ENCODE measurements at regions of chr12 and their contacts with region 1.

Region 1: GRCh38 chr12:120686690-120687577 is at the start of gene MLEC:
- DNase-seq: peak; percentile 100
- H3K4me3 Mint-ChIP-seq: peak within 1 kb of the TSS; percentile 88
- H3K27ac Mint-ChIP-seq: peak within 1 kb of the TSS; percentile 86
- H3K4me1 Mint-ChIP-seq: peaks cover 48% of the 10 kb centered on the region
- H3K27me3 Mint-ChIP-seq: no peaks in the 10 kb centered on the region
- total RNA-seq, gene MLEC: 139 and 150 TPM in 2 replicates

Region 2: DNA sequence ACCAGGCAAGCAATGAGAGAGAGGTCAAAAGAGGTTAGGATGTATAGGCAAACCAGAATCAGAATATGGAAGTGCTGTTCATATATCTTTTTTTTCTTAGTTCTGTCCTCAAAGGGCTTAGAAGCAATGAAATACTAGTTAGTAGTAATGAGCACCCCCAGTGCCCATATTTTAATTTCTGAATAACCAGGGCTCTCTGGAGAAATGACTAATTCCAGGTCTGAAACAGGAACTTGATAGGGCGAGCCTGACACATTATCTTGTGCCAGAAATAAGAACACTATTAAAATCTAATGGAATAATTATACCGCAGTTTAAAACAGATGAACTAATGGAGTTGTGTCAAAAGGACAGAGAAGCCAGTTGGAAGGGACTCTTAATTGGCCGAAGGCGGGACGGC is 667.0 kb before region 1 on chr12:
- intact Hi-C with region 1: no loop called
- DNase-seq: no peak
- H3K4me3 Mint-ChIP-seq: no peak overlapping the region
- H3K27ac Mint-ChIP-seq: peak overlapping the region; percentile 44
- H3K4me1 Mint-ChIP-seq: peaks cover 34% of the 10 kb centered on the region
- H3K27me3 Mint-ChIP-seq: no peaks in the 10 kb centered on the region

Region 3: GRCh38 chr12:120116792-120117651 is 569.9 kb before region 1 on chr12:
- intact Hi-C with region 1: loop called (anchors 2 kb)
- DNase-seq: peak; percentile 97
- H3K4me3 Mint-ChIP-seq: peak overlapping the region; percentile 92
- H3K27ac Mint-ChIP-seq: peak overlapping the region; percentile 94
- H3K4me1 Mint-ChIP-seq: peaks cover 72% of the 10 kb centered on the region
- H3K27me3 Mint-ChIP-seq: no peaks in the 10 kb centered on the region

Region 4: DNA sequence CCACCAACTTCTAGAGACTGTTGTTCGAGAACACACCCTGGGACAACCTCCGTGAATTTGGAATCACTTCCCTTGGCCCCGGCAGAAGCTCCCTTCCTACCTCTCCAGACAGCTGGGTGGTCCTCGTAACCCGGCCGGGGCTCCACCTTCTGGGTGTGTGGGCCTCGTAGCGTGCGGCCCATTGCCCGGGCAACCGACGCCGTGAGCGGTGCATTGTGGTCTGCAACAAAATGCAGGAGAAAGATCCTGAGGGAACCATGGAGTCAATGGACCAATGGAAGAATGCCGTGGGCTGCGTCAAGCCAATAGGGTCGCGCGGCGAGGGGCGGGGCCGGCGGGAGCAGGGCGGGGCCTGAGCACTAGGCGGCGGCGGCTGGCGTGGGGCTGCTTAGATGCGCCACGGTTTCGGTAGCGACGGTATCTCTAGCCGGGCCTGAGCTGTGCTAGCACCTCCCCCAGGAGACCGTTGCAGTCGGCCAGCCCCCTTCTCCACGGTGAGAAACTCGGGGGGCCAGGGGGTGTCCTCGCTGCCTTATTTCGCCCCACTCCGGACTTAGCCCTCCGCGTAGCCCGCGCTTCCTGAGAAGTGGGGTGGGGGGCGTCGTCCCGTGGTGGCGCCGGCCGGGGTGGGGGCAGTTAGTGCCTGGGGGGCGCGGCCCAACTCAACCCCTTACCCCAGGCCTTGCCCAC is 191.1 kb before region 1 on chr12 and contains the start of gene DYNLL1:
- intact Hi-C with region 1: loop called (anchors 1 kb)
- DNase-seq: peak; percentile 98
- H3K4me3 Mint-ChIP-seq: peak within 1 kb of the TSS; percentile 99
- H3K27ac Mint-ChIP-seq: peak within 1 kb of the TSS; percentile 89
- H3K4me1 Mint-ChIP-seq: peaks cover 37% of the 10 kb centered on the region
- H3K27me3 Mint-ChIP-seq: no peaks in the 10 kb centered on the region
- total RNA-seq, gene DYNLL1: 341 and 356 TPM in 2 replicates

Region 5: GRCh38 chr12:120649442-120650232 is 37.3 kb before region 1 on chr12:
- intact Hi-C with region 1: loop called (anchors 1 kb)
- DNase-seq: no peak
- H3K4me3 Mint-ChIP-seq: no peak overlapping the region
- H3K27ac Mint-ChIP-seq: no peak overlapping the region
- H3K4me1 Mint-ChIP-seq: peaks cover 15% of the 10 kb centered on the region
- H3K27me3 Mint-ChIP-seq: peaks cover 54% of the 10 kb centered on the region

Region 6: GRCh38 chr12:120904197-120904773 is 217.4 kb after region 1 on chr12 and contains the start of gene SPPL3:
- intact Hi-C with region 1: loop called (anchors 1 kb)
- DNase-seq: peak; percentile 88
- H3K4me3 Mint-ChIP-seq: peak within 1 kb of the TSS; percentile 100
- H3K27ac Mint-ChIP-seq: peak within 1 kb of the TSS; percentile 94
- H3K4me1 Mint-ChIP-seq: peaks cover 21% of the 10 kb centered on the region
- H3K27me3 Mint-ChIP-seq: peaks cover 2% of the 10 kb centered on the region
- total RNA-seq, gene SPPL3: 27.3 and 31.2 TPM in 2 replicates

Region 7: GRCh38 chr12:121209624-121210572 is 523.0 kb after region 1 on chr12 and contains the start of gene P2RX4:
- intact Hi-C with region 1: loop called (anchors 1 kb)
- DNase-seq: peak; percentile 87
- H3K4me3 Mint-ChIP-seq: peak within 1 kb of the TSS; percentile 85
- H3K27ac Mint-ChIP-seq: peak within 1 kb of the TSS; percentile 94
- H3K4me1 Mint-ChIP-seq: peaks cover 33% of the 10 kb centered on the region
- H3K27me3 Mint-ChIP-seq: peaks cover 1% of the 10 kb centered on the region
- total RNA-seq, gene P2RX4: 22.8 and 25.3 TPM in 2 replicates

Region 8: DNA sequence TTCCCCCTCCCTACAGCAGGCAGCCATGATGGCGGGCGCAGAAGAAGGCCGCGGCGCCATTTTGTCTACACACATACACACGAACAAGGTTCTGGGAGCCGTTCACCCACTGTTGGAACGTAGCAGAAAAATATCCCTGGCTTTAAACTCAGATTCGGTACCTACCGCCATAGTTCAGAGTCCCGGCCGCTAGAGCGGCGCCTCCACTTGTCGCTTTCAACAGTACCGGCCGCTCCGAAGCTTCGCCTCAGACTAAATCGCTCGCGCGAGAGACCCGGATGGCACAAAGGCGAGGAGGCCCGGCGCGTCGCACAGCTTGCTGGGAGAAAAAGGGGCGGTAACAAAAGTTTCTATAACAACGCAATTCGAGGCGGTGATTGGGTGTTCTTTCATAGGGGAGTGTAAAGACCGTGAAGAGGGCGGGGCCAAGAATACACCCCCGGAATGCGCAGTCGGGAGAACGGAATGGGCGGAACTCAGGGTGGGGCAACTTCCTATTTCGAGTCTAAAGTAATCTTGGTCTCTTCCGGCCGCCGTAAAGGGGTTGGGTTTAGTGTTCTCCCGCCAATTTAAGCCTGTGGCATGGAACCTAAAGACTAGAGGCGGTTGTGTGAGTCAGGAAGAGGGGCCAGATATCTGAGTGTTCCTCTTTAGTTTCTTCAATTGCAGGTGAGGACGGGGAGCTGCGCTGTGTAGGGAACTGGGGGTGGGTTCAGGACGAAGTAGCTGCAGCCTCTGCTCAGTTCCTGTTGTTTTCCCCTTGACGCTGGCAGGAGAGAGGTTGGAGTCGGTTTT is 1839.9 kb after region 1 on chr12 and contains the starts of genes KNTC1 and RSRC2:
- intact Hi-C with region 1: loop called (anchors 10 kb)
- DNase-seq: peak; percentile 99
- H3K4me3 Mint-ChIP-seq: no peak within 1 kb of the TSS
- H3K27ac Mint-ChIP-seq: no peak within 1 kb of the TSS
- H3K4me1 Mint-ChIP-seq: peaks cover 43% of the 10 kb centered on the region
- H3K27me3 Mint-ChIP-seq: no peaks in the 10 kb centered on the region
- total RNA-seq, gene KNTC1: 122 and 126 TPM in 2 replicates
- total RNA-seq, gene RSRC2: 101 and 103 TPM in 2 replicates